Activated CD8-positive, alpha-beta T cell treated with anti-CD3 and anti-CD28 coated beads for 36 hours (primary cell): ENCODE measurements at regions of chr9 and their contacts with region 1.

Region 1: DNA sequence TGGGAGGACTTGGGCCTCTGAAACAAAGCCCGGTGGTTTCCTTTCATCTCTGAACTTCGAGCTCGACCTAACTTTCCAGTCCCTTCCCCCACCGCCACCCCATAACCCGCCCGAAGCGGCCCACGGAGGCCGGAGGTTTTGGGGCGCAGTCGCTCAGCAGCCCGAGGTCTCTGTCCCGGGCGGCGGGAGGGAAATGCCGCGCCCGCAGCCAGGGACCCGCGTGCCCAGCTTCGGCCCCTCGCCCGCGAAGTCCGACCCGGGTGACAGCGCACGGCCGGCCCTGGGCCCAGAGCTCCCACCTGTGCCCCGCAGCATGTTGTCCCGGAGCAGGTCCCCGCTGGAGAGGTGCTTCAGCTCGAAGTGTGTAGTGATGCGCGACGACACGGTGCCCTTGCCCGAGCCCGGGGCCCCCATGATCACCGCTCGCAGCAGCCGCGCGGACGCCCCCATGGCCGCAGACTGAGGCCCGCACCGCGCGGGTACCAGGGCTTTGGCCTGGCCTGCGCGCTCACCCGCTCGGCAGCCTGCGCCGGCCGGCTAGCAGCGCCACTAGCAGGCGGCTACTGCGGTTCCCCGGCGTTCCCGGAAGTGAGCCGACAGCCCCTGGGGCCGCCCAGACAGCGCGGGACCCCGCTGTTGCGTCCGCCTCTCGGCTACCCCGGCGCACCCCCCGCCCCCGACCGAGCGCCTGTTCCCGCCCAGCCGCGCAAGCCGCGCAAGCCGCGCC is at the start of gene AK3:
- DNase-seq: peak; percentile 92
- ATAC-seq: peak; percentile 95
- H3K4me3 Mint-ChIP-seq: peak within 1 kb of the TSS; percentile 88
- H3K27ac Mint-ChIP-seq: peak within 1 kb of the TSS; percentile 90
- H3K4me1 Mint-ChIP-seq: peaks cover 34% of the 10 kb centered on the region
- H3K27me3 Mint-ChIP-seq: no peaks in the 10 kb centered on the region
- CTCF ChIP-seq: no peak
- total RNA-seq, gene AK3: 34.3 to 35.5 TPM

Region 2: DNA sequence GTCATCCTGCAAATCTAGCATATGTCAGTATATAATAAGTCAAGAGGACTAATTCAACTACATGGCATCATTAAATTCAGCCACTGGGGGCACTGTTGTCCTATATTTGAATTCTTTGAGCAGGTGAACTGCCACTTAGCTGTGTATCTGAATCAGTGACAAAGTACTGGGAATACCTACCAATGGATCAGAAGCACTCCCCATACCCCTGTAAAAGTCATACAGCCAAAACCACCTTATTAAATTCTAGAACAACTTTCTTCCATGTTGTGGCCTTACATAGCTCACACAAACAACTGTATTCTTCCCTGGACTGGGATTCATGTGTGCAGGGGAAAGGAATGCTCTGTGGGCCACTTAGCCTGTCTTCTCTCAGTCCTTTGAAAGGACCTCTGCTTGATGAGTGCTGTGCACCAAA is 136.1 kb before region 1 on chr9:
- CTCF ChIA-PET with region 1: interaction called, 4 read pairs
- POLR2A ChIA-PET with region 1: no interaction called
- intact Hi-C with region 1: loop called (anchors 10 kb)
- DNase-seq: peak; percentile 85
- ATAC-seq: peak; percentile 93
- H3K4me3 Mint-ChIP-seq: no peak overlapping the region
- H3K27ac Mint-ChIP-seq: no peak overlapping the region
- H3K4me1 Mint-ChIP-seq: peaks cover 20% of the 10 kb centered on the region
- H3K27me3 Mint-ChIP-seq: no peaks in the 10 kb centered on the region
- CTCF ChIP-seq: peak; percentile 76

Region 3: DNA sequence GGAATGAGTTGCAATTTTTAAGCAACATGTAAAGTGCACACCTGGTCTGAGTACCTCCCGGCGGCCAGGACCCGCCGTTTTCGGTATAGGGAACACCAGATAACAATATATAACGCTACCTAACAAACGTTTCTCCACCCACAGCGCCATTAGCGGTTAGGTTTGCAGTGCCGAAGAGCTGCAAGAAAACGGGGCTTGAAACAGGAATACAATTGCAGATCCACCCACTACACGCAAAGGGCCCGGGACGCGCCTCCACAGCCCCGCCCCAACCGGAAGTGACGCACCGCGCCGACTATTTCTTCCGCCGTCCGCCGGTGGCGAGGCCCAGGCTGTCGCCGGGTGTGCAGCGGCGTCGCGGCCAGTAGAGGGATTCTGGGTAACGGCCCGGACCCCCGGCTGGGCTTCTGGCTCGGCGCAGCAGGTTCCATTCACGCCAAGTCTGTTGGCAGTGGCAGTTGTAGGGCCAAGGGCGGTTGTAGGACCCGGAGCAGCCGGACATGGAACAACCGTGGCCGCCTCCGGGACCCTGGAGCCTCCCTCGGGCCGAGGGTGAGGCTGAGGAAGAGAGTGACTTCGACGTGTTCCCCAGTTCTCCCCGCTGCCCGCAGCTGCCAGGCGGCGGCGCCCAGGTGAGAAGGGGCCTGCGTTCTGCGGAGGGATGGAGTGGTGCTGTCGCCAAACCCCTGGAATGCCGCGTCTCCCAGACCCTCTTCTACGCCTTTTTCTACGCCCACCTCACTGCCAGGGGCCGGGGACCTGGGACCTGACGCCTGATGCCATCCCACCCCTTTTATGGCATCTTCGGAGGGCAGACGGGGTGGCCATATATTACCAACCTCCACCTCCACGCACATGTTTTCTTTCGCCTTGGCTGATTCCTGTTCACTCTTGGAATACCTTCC is 61.3 kb before region 1 on chr9 and contains the start of gene CDC37L1:
- CTCF ChIA-PET with region 1: interaction called, 4 read pairs
- POLR2A ChIA-PET with region 1: interaction called, 10 read pairs
- intact Hi-C with region 1: loop called (anchors 5 kb)
- DNase-seq: peak; percentile 99
- ATAC-seq: peak; percentile 97
- H3K4me3 Mint-ChIP-seq: no peak within 1 kb of the TSS
- H3K27ac Mint-ChIP-seq: no peak within 1 kb of the TSS
- H3K4me1 Mint-ChIP-seq: peaks cover 11% of the 10 kb centered on the region
- H3K27me3 Mint-ChIP-seq: no peaks in the 10 kb centered on the region
- CTCF ChIP-seq: peak; percentile 79
- total RNA-seq, gene CDC37L1: 10.0 to 10.2 TPM

Region 4: GRCh38 chr9:4796988-4797853 is 56.4 kb after region 1 on chr9:
- CTCF ChIA-PET with region 1: no interaction called
- POLR2A ChIA-PET with region 1: no interaction called
- intact Hi-C with region 1: no loop called
- DNase-seq: peak; percentile 18
- ATAC-seq: no peak
- H3K4me3 Mint-ChIP-seq: no peak overlapping the region
- H3K27ac Mint-ChIP-seq: no peak overlapping the region
- H3K4me1 Mint-ChIP-seq: peaks cover 48% of the 10 kb centered on the region
- H3K27me3 Mint-ChIP-seq: no peaks in the 10 kb centered on the region
- CTCF ChIP-seq: peak; percentile 57